ENCODE measurements at regions of chr9 and their contacts with region 1.

Region 1: DNA sequence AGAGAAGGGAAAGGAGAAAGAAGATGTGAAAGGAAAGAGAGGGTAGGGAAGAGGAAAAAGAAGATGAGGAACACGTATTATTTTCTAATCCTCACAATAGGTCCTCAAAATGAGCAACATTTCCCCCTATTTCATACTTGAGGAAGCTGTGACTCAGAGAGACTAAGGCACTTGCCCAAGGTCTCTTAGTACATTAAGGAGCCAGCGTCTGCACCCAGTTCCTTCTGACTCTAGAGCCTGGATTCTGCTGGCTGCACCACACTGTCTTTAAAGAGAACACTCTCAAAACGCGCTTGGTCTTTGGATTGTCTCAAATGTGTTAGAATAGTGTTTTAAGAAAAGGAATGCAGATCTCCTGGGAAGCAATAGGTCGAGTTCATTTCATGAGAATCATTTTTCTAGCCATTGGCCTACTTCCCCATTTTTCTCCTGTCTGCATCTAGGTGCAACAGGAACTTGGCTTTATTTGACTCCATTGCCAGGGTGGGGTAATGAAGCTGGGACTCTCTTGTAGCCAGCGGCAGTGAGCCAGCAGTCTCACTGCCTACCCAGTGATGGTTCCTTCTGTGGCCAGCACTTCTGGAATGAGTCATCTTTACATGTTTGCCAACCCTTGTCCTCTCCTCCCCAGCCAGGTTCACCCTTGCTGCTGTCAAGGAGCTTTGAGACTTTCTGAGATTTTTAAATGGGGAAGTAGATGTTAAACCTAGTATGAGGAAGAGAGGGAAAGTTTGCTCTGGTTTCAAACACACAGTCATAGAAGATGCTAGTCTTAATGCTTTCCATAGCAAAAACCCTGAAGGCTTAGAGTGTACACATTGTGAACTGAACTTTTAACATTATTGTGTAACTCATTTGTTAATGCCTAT is 82.7 kb downstream of the DOCK8 start:
- DNase-seq: peak in 3 of 4 donors; percentile 15 to 70 (median 31)
- ATAC-seq: peak; percentile 38
- H3K4me3 ChIP-seq: no peak overlapping the region
- H3K27ac ChIP-seq: peak overlapping the region in 1 of 4 donors; percentile 54
- H3K4me1 ChIP-seq: no peaks in the 10 kb centered on the region
- H3K27me3 ChIP-seq: no peaks in the 10 kb centered on the region
- CTCF ChIP-seq: no peak
- POLR2A ChIP-seq: no peak

Region 2: DNA sequence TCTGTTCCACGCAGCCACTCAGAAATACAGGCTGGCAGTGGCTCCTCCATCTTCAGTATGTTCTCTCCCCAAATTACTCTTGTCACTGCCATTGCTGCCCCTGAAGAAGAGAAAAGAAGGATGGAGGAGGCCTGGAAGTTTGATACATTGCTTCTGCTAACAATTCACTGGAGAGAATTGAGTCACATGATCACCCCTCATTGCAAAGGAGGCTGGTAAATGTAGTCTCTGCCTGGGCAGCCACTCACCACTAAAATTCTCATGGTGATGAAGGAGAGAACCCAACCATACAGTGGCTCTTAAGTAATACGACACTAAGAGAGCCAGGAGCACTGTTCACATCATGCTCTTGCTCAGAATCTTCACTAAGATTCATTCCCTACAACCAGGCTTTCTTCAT is 29.3 kb after region 1 on chr9:
- intact Hi-C with region 1: no loop called
- DNase-seq: no peak
- ATAC-seq: no peak
- H3K4me3 ChIP-seq: no peak overlapping the region
- H3K27ac ChIP-seq: no peak overlapping the region
- H3K4me1 ChIP-seq: no peaks in the 10 kb centered on the region
- H3K27me3 ChIP-seq: no peaks in the 10 kb centered on the region
- CTCF ChIP-seq: no peak
- POLR2A ChIP-seq: no peak

Region 3: DNA sequence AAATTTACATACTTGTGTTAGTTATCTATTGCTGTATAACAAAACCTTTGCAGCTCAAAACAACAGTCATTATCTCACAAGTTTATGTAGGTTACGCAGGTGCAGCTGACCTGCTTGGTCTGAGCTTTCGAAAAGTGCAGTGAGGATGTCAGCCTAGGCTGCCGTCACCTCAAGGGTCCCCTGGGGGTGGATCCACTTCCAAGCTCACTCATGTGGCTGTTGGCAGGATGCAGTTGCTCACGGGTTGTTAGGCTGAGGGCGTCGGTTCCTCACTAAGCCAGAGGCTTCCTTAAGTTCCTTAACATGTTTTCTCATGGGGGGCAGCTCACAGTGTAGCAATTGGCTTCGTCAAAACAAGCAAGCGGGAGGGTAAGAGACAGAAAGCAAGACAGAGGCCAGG is 57.1 kb after region 1 on chr9:
- intact Hi-C with region 1: loop called (anchors 10 kb)
- DNase-seq: no peak
- ATAC-seq: no peak
- H3K4me3 ChIP-seq: no peak overlapping the region
- H3K27ac ChIP-seq: no peak overlapping the region
- H3K4me1 ChIP-seq: peaks cover 6% of the 10 kb centered on the region
- H3K27me3 ChIP-seq: no peaks in the 10 kb centered on the region
- CTCF ChIP-seq: no peak
- POLR2A ChIP-seq: no peak

Region 4: GRCh38 chr9:366620-367019 is 69.3 kb after region 1 on chr9:
- intact Hi-C with region 1: no loop called
- DNase-seq: no peak
- ATAC-seq: no peak
- H3K4me3 ChIP-seq: no peak overlapping the region
- H3K27ac ChIP-seq: no peak overlapping the region
- H3K4me1 ChIP-seq: no peaks in the 10 kb centered on the region
- H3K27me3 ChIP-seq: no peaks in the 10 kb centered on the region
- CTCF ChIP-seq: no peak
- POLR2A ChIP-seq: no peak

Region 5: GRCh38 chr9:642014-642413 is 344.7 kb after region 1 on chr9:
- intact Hi-C with region 1: no loop called
- DNase-seq: no peak
- ATAC-seq: no peak
- H3K4me3 ChIP-seq: no peak overlapping the region
- H3K27ac ChIP-seq: no peak overlapping the region
- H3K4me1 ChIP-seq: no peaks in the 10 kb centered on the region
- H3K27me3 ChIP-seq: no peaks in the 10 kb centered on the region
- CTCF ChIP-seq: no peak
- POLR2A ChIP-seq: no peak